ENCODE measurements at regions of chr7 and their contacts with region 1.

Region 1: DNA sequence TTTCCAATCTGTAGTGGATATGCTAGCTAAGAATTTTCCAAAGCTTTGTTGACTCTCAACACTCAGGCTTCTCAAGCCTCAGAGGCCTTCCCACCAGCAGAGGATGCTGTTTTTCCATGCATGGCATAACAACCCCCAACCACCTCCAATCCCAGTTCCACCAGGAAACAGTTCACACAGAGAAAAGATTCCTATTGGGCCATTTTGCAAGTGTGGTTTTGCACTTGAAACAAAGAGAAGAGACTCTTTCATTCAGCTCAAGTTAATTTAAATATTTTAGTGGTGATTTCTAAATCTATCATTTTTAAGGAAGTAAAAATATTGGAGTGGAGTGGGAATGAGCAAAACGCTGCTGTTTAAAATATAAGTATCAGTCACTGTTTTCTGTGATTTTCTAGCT is 105.6 kb upstream of the COL1A2 start:
- DNase-seq: peak; percentile 87
- H3K4me3 ChIP-seq: no peak overlapping the region
- H3K27ac ChIP-seq: no peak overlapping the region
- H3K4me1 ChIP-seq: no peaks in the 10 kb centered on the region
- H3K27me3 ChIP-seq: no peaks in the 10 kb centered on the region
- CTCF ChIP-seq: peak; percentile 90 to 96
- POLR2A ChIP-seq: no peak

Region 2: DNA sequence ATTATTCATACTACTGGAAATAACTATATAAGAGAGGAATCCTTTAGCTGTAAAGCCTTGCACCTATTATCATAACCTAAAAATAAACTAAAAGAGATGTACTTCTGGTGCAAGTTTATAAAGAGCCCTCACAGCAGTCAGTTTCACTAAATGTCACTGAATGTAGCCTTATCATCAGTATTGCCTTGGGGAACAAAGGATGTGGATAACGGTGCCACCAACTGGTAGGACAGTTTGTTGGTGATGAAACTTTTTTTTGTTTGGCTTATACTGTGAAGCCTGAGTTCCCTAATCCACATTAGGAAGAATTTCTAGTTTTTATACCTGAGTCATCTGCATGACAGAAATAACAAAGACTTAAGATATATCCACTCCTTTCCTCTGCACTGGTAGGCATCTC is 12.3 kb before region 1 on chr7:
- CTCF ChIA-PET with region 1: interaction called, 24 read pairs
- POLR2A ChIA-PET with region 1: no interaction called
- dilution Hi-C with region 1: no loop called
- intact Hi-C with region 1: no loop called
- DNase-seq: peak; percentile 57
- H3K4me3 ChIP-seq: no peak overlapping the region
- H3K27ac ChIP-seq: no peak overlapping the region
- H3K4me1 ChIP-seq: no peaks in the 10 kb centered on the region
- H3K27me3 ChIP-seq: no peaks in the 10 kb centered on the region
- CTCF ChIP-seq: peak; percentile 25 to 29
- POLR2A ChIP-seq: no peak

Region 3: DNA sequence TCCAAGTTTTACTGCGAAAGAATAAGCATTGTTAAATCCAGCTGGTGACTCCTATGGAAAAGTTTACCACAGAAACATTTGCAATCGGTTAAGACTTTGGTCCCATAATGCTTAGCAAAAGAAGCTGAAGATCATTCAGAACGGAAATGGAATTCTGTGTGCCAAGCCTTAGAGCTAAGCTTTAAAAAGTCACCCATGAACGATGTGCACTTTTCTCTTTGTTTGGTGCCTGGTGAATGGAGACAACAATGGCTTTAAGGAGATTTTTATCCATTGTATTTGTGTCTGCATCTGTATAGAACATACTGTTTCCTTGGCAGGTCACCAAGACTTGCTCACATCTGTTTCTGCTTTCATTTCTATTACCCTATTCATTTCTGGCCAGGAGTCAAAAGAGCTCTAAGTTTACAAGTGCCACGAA is 79.3 kb after region 1 on chr7:
- CTCF ChIA-PET with region 1: interaction called, 22 read pairs
- POLR2A ChIA-PET with region 1: no interaction called
- dilution Hi-C with region 1: no loop called
- intact Hi-C with region 1: no loop called
- DNase-seq: peak; percentile 97
- H3K4me3 ChIP-seq: peak overlapping the region in 1 of 3 experiments; percentile 30
- H3K27ac ChIP-seq: peak overlapping the region; percentile 88
- H3K4me1 ChIP-seq: peaks cover 15% of the 10 kb centered on the region
- H3K27me3 ChIP-seq: no peaks in the 10 kb centered on the region
- CTCF ChIP-seq: no peak
- POLR2A ChIP-seq: no peak

Region 4: GRCh38 chr7:94423863-94424735 is 135.0 kb after region 1 on chr7:
- CTCF ChIA-PET with region 1: interaction called, 12 read pairs
- POLR2A ChIA-PET with region 1: no interaction called
- dilution Hi-C with region 1: loop called (anchors 25 kb)
- intact Hi-C with region 1: no loop called
- DNase-seq: no peak
- H3K4me3 ChIP-seq: no peak overlapping the region
- H3K27ac ChIP-seq: no peak overlapping the region
- H3K4me1 ChIP-seq: no peaks in the 10 kb centered on the region
- H3K27me3 ChIP-seq: no peaks in the 10 kb centered on the region
- CTCF ChIP-seq: no peak
- POLR2A ChIP-seq: no peak

Region 5: GRCh38 chr7:94449148-94449725 is 160.2 kb after region 1 on chr7:
- CTCF ChIA-PET with region 1: interaction called, 27 read pairs
- POLR2A ChIA-PET with region 1: no interaction called
- dilution Hi-C with region 1: loop called (anchors 25 kb)
- intact Hi-C with region 1: no loop called
- DNase-seq: peak; percentile 51
- H3K4me3 ChIP-seq: no peak overlapping the region
- H3K27ac ChIP-seq: no peak overlapping the region
- H3K4me1 ChIP-seq: peaks cover 3% of the 10 kb centered on the region
- H3K27me3 ChIP-seq: no peaks in the 10 kb centered on the region
- CTCF ChIP-seq: peak; percentile 27 to 38
- POLR2A ChIP-seq: no peak

Region 6: GRCh38 chr7:95246831-95247370 is 957.8 kb after region 1 on chr7:
- CTCF ChIA-PET with region 1: interaction called, 30 read pairs
- POLR2A ChIA-PET with region 1: no interaction called
- dilution Hi-C with region 1: no loop called
- intact Hi-C with region 1: loop called (anchors 2 kb)
- DNase-seq: peak; percentile 71
- H3K4me3 ChIP-seq: no peak overlapping the region
- H3K27ac ChIP-seq: no peak overlapping the region
- H3K4me1 ChIP-seq: no peaks in the 10 kb centered on the region
- H3K27me3 ChIP-seq: no peaks in the 10 kb centered on the region
- CTCF ChIP-seq: peak; percentile 63 to 68
- POLR2A ChIP-seq: no peak

Measured in endothelial cell of umbilical vein (primary cell).